ENCODE measurements at regions of chr12 and their contacts with region 1.

Region 1: DNA sequence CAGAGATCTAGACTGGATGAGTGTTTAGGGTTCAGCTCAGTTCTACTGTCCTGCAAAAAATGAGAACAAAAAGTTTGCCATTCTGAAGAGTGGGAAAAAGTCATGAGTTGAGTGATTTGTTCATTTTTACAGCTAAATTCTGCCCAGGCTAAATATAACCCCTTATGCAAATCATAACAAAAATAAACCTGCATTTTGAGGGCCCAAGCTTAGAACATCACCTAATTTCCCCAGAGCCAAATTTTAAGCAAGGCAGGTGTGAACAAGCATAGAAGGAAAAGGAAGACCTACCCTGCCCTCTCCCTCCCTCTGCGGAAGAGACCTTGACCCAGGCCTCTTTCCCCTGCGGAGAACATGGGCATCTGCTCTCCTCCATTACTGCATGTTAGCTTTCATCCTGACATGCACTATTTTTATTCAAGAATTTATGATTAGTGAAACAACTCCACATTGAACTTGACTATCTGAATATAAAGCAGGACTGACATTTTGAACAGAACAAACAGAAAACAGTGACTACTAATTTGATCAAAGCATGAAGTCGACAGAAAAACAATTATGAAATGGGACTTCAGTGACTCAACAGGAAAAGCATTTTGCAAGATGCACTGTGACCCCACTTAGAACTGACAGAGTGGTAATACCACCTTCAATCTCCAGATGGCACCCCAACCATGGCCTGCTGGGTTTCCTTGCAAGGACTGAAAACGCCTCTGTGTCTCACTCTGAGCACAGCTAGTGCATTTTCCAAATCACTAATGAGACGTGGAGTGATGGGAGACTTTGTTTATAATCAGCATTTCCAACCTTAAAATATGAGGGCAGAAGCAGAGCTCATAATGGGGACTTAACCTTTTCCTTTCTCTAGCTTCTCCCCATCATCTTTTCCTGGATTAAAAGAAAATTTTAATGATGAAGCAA is 30.9 kb upstream of the SELPLG start:
- DNase-seq: peak; percentile 91
- ATAC-seq: peak; percentile 99
- H3K4me3 Mint-ChIP-seq: peak overlapping the region; percentile 18
- H3K27ac Mint-ChIP-seq: peak overlapping the region; percentile 84
- H3K4me1 Mint-ChIP-seq: peaks cover 29% of the 10 kb centered on the region
- H3K27me3 Mint-ChIP-seq: no peaks in the 10 kb centered on the region

Region 2: GRCh38 chr12:108175310-108175709 is 489.3 kb before region 1 on chr12:
- CTCF ChIA-PET with region 1: no interaction called
- POLR2A ChIA-PET with region 1: no interaction called
- intact Hi-C with region 1: no loop called
- DNase-seq: no peak
- ATAC-seq: no peak
- H3K4me3 Mint-ChIP-seq: no peak overlapping the region
- H3K27ac Mint-ChIP-seq: no peak overlapping the region
- H3K4me1 Mint-ChIP-seq: no peaks in the 10 kb centered on the region
- H3K27me3 Mint-ChIP-seq: peaks cover 3% of the 10 kb centered on the region

Region 3: GRCh38 chr12:108633534-108634248 is 30.9 kb before region 1 on chr12 and contains the start of gene SELPLG:
- CTCF ChIA-PET with region 1: interaction called, 23 read pairs
- POLR2A ChIA-PET with region 1: no interaction called
- intact Hi-C with region 1: no loop called
- DNase-seq: peak; percentile 92
- ATAC-seq: peak; percentile 53
- H3K4me3 Mint-ChIP-seq: peak within 1 kb of the TSS; percentile 81
- H3K27ac Mint-ChIP-seq: peak within 1 kb of the TSS; percentile 99
- H3K4me1 Mint-ChIP-seq: peaks cover 61% of the 10 kb centered on the region
- H3K27me3 Mint-ChIP-seq: no peaks in the 10 kb centered on the region
- total RNA-seq, gene SELPLG: 31.0 to 36.9 TPM

Region 4: GRCh38 chr12:108685469-108686260 is 21.1 kb after region 1 on chr12:
- CTCF ChIA-PET with region 1: interaction called, 30 read pairs
- POLR2A ChIA-PET with region 1: interaction called, 5 read pairs
- intact Hi-C with region 1: loop called in 1 of 2 experiments (anchors 1 kb)
- DNase-seq: no peak
- ATAC-seq: no peak
- H3K4me3 Mint-ChIP-seq: no peak overlapping the region
- H3K27ac Mint-ChIP-seq: no peak overlapping the region
- H3K4me1 Mint-ChIP-seq: peaks cover 47% of the 10 kb centered on the region
- H3K27me3 Mint-ChIP-seq: no peaks in the 10 kb centered on the region

Region 5: DNA sequence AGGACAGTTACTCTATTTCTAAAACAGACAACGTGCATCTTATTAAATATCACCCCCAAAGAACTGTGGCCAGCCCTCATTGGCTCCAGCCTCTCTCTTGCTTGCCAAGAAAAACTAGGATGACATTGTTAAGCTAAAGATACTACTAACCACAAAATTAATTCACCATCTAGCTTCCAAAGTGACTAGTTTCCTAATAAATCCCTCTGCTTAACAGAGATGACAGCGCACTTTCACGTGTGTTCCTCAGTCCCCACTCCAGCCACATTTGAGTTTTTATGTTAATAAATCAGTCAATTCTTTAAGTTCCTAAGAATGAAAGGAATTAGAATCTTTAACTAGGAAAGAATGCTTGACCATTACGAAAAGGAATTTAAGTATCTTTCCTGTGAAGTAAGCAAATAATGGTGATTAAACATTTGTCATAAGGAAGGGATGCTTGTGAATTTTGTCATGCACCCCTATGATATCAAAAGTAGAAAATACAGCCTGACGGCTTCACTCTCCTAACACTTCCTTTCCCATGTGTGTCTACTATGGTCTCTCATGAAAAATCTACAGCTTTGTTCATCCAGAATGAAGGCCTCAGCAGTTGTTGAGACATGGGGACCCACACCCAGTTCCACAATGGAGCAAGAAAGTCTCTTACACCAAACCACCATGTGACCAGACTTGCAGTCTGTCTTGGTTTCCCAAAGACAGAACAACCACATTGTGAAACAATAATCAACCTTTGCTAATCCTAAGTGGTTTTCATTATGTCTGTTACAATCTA is 58.6 kb after region 1 on chr12:
- CTCF ChIA-PET with region 1: interaction called, 10 read pairs
- POLR2A ChIA-PET with region 1: no interaction called
- intact Hi-C with region 1: loop called in 1 of 2 experiments (anchors 2 kb)
- DNase-seq: peak; percentile 7
- ATAC-seq: peak; percentile 54
- H3K4me3 Mint-ChIP-seq: no peak overlapping the region
- H3K27ac Mint-ChIP-seq: no peak overlapping the region
- H3K4me1 Mint-ChIP-seq: peaks cover 39% of the 10 kb centered on the region
- H3K27me3 Mint-ChIP-seq: no peaks in the 10 kb centered on the region

Region 6: GRCh38 chr12:108738170-108738569 is 73.6 kb after region 1 on chr12:
- CTCF ChIA-PET with region 1: interaction called, 16 read pairs
- POLR2A ChIA-PET with region 1: no interaction called
- intact Hi-C with region 1: no loop called
- DNase-seq: no peak
- ATAC-seq: peak; percentile 44
- H3K4me3 Mint-ChIP-seq: no peak overlapping the region
- H3K27ac Mint-ChIP-seq: no peak overlapping the region
- H3K4me1 Mint-ChIP-seq: peaks cover 10% of the 10 kb centered on the region
- H3K27me3 Mint-ChIP-seq: peaks cover 2% of the 10 kb centered on the region

Region 7: DNA sequence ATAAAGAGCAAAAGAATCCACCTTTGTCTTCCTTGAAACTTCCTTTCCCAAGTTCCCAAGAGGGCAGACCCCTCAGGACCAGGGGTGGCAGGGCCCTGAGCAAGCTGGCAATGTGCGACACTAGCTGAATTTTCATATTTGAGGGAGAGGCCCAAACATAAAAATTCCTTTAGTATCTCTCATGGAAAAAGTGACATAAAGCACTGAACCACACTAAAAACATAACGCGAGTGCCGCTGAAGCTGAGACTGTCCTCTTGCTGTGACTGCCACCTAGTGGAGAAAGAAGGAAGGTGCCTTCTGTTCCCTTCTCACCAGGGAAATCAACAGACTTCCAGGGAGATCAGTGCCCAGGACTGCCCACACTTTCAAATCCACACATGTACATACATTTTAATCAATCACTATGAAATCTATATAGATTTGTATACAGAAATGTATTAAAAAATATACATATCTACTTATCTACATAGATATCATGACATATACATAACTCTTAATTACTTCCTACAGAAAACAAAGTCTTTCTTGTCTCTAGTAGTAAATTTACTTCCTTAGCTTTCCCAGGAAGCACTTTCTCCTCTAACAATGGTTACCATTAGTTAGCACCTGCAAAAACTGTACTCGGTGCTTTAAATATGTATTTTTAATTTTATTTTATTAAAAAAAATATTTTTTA is 139.0 kb after region 1 on chr12:
- CTCF ChIA-PET with region 1: interaction called, 281 read pairs
- POLR2A ChIA-PET with region 1: no interaction called
- intact Hi-C with region 1: loop called (anchors 1 kb)
- DNase-seq: peak; percentile 80
- ATAC-seq: peak; percentile 91
- H3K4me3 Mint-ChIP-seq: no peak overlapping the region
- H3K27ac Mint-ChIP-seq: peak overlapping the region; percentile 37
- H3K4me1 Mint-ChIP-seq: peaks cover 6% of the 10 kb centered on the region
- H3K27me3 Mint-ChIP-seq: no peaks in the 10 kb centered on the region

Region 8: DNA sequence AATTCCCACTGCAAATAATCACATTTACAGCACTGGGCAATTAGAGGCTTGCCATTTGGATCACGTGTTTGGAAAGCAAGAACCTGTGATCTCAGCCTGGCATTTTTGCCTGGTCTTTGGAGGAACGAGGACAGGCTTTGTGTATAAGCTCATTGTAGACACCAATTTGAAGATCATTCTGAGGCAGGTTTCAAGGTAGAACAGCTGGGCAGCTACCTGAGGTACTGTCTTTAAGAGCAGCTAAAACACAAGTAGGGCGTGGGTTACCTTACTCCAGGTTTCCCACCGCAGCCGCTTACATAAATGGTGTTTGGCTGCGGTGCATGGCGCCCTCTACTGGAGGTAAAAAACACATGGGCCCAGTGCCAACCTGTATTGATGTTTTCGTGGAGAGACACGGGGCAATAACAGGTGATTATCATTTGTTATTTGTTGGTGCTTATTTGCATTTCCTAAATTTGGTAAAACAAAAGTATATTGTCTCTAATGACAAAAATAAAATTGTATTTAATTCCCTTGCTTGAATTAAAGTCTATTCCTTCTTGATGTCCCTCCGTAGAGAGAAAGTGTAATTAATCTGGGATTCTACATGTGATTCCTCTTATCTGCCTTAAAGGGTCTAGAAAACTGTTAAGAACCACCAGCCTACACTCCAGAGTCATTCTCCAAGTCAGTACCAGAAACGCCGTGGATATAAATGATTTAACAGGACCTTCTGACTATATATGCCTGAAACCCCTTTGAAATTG is 286.6 kb after region 1 on chr12:
- CTCF ChIA-PET with region 1: interaction called, 13 read pairs
- POLR2A ChIA-PET with region 1: no interaction called
- intact Hi-C with region 1: loop called (anchors 1 to 5 kb)
- DNase-seq: peak; percentile 83
- ATAC-seq: peak; percentile 84
- H3K4me3 Mint-ChIP-seq: no peak overlapping the region
- H3K27ac Mint-ChIP-seq: no peak overlapping the region
- H3K4me1 Mint-ChIP-seq: peaks cover 2% of the 10 kb centered on the region
- H3K27me3 Mint-ChIP-seq: peaks cover 8% of the 10 kb centered on the region